ENCODE measurements at regions of chr5 and their contacts with region 1.

Region 1: GRCh38 chr5:14644623-14645237 is 19.8 kb upstream of the OTULIN start:
- DNase-seq: no peak
- H3K4me3 ChIP-seq: no peak overlapping the region
- H3K27ac ChIP-seq: no peak overlapping the region
- H3K4me1 ChIP-seq: no peaks in the 10 kb centered on the region
- H3K27me3 ChIP-seq: peaks cover 2% of the 10 kb centered on the region

Region 2: DNA sequence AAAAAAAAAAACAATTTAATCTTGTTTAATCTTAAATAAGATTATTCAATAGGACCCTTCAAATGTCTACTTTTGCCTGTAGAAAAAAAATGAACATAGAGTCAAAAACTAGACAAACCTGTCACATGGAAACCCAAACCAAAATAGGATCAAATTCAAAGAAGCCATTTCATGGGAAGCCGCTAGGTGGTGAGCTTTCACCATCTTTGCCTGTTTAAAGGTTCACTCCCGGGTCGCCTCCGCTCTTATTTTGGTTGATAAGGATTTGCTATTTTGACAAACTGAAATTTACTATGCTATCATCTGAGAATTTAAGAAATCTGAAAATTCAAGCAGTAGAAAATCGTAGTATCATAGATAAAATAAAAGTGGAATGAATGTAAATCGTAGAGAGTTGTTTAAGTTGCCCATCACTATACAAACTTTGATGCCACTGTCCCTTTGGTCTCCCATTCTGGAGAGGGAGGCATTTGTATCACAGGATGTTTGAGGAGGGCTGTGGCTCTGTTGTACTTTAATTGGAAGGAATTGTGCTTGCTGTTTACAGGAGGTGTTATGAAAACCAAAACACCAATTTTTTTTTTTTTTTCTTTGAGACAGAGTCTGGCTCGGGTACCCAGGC is 656.8 kb before region 1 on chr5:
- in situ Hi-C with region 1: loop called (anchors 10 kb)
- DNase-seq: peak; percentile 84
- H3K4me3 ChIP-seq: no peak overlapping the region
- H3K27ac ChIP-seq: no peak overlapping the region
- H3K4me1 ChIP-seq: peaks cover 16% of the 10 kb centered on the region
- H3K27me3 ChIP-seq: no peaks in the 10 kb centered on the region

Region 3: GRCh38 chr5:14399054-14399692 is 245.6 kb before region 1 on chr5:
- in situ Hi-C with region 1: loop called (anchors 10 kb)
- DNase-seq: peak; percentile 82
- H3K4me3 ChIP-seq: peak overlapping the region; percentile 1; the same call in 1 of the 2 replicates
- H3K27ac ChIP-seq: peak overlapping the region; percentile 74
- H3K4me1 ChIP-seq: peaks cover 60% of the 10 kb centered on the region
- H3K27me3 ChIP-seq: no peaks in the 10 kb centered on the region

Region 4: GRCh38 chr5:14417276-14417730 is 227.4 kb before region 1 on chr5:
- in situ Hi-C with region 1: no loop called
- DNase-seq: peak; percentile 63
- H3K4me3 ChIP-seq: no peak overlapping the region
- H3K27ac ChIP-seq: peak overlapping the region; percentile 82
- H3K4me1 ChIP-seq: peaks cover 34% of the 10 kb centered on the region
- H3K27me3 ChIP-seq: no peaks in the 10 kb centered on the region

Region 5: GRCh38 chr5:15021266-15022046 is 376.7 kb after region 1 on chr5:
- in situ Hi-C with region 1: no loop called
- DNase-seq: peak; percentile 92
- H3K4me3 ChIP-seq: peak overlapping the region; percentile 52
- H3K27ac ChIP-seq: peak overlapping the region; percentile 87
- H3K4me1 ChIP-seq: peaks cover 51% of the 10 kb centered on the region
- H3K27me3 ChIP-seq: no peaks in the 10 kb centered on the region